WTC11 (cell line): ENCODE measurements at regions of chr7 and their contacts with region 1.

Region 1: GRCh38 chr7:77428041-77428473 is 11.9 kb upstream of the GSAP start:
- DNase-seq: no peak
- ATAC-seq: peak; percentile 12
- H3K4me3 Mint-ChIP-seq: no peak overlapping the region
- H3K27ac Mint-ChIP-seq: peak overlapping the region; percentile 19; the same call in 1 of the 2 replicates
- H3K4me1 Mint-ChIP-seq: peaks cover 50% of the 10 kb centered on the region
- H3K27me3 Mint-ChIP-seq: no peaks in the 10 kb centered on the region
- CTCF ChIP-seq: no peak

Region 2: DNA sequence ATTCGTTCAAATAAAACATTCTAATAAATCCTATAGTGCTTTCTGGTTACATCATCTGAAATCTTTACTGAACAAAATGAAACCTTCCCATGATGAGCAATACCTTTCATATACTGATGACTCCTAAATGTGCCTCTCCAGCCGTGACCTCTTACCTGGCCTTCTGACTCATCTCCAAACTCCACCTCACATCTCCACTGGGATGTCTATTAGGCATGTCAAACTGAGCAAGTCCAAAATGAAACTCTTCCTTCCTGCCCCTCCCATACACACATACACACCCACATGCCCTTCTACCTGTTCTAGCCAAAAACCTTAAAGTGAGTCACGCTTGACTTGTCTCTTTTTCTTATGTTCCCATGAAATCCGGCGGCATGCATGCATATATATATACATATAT is 34.8 kb before region 1 on chr7:
- CTCF ChIA-PET with region 1: no interaction called
- POLR2A ChIA-PET with region 1: no interaction called
- DNase-seq: no peak
- ATAC-seq: no peak
- H3K4me3 Mint-ChIP-seq: no peak overlapping the region
- H3K27ac Mint-ChIP-seq: no peak overlapping the region
- H3K4me1 Mint-ChIP-seq: peaks cover 24% of the 10 kb centered on the region
- H3K27me3 Mint-ChIP-seq: no peaks in the 10 kb centered on the region
- CTCF ChIP-seq: no peak

Region 3: DNA sequence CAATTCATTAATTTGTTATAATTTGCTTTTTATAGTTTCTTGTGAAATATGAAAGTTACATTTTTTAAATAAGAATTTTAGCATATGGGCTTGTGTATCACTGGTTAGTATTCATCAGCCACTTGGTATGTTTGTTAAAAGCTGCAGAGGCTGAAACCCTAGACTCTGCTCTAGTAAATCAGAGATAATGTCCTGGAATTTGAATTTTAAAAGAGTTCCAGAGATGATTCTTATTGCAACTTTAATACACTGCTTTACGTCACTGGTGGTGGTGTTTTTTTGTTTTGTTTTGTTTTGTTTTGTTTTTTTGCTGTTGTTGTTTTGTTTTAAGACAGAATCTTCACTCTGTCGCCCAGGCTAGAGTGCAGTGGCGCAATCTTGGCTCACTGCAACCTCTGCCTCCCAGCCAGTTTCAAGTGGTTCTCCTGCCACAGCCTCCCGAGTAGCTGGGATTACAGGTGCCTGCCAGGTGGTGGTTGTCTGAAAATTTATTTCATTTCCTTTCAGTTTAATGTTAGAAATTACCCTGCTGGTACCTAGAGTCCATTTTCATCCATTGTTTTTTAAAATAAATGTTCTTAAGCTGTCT is 152.8 kb after region 1 on chr7:
- CTCF ChIA-PET with region 1: no interaction called
- POLR2A ChIA-PET with region 1: interaction called, 12 read pairs
- DNase-seq: no peak
- ATAC-seq: no peak
- H3K4me3 Mint-ChIP-seq: no peak overlapping the region
- H3K27ac Mint-ChIP-seq: 0 out of 2 replicates have a peak overlapping the region, but pooled peaks have one; percentile 53
- H3K4me1 Mint-ChIP-seq: no peaks in the 10 kb centered on the region
- H3K27me3 Mint-ChIP-seq: no peaks in the 10 kb centered on the region
- CTCF ChIP-seq: no peak